Kidney (tissue), 22 donors: ENCODE measurements at regions of chr3 and their contacts with region 1.

Region 1: DNA sequence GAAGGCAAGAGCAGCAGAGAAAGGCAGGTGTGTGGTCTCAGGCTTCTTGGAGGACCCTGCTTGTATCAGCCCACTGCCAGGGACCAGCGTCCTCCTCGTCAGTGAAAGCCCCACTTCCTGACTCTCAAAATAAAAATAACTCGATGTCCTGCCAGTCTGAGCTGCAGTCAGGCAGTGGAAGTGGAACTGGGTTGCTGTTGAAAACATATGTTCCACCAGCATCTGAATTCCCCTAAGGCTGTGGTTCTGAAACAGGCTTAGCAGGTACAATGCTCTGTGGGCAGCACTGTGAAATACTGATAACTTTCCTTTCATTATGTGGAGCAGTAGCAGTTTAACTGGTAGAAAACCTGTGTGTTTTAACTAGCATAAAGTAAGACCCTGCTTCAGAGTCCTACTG is 121.6 kb upstream of the EIF1B start:
- DNase-seq: peak in 1 of 5 donors; percentile 16
- H3K4me3 ChIP-seq: no peak overlapping the region
- H3K27ac ChIP-seq: no peak overlapping the region
- H3K4me1 ChIP-seq: no peaks in the 10 kb centered on the region
- H3K27me3 ChIP-seq: no peaks in the 10 kb centered on the region
- CTCF ChIP-seq: no peak

Region 2: DNA sequence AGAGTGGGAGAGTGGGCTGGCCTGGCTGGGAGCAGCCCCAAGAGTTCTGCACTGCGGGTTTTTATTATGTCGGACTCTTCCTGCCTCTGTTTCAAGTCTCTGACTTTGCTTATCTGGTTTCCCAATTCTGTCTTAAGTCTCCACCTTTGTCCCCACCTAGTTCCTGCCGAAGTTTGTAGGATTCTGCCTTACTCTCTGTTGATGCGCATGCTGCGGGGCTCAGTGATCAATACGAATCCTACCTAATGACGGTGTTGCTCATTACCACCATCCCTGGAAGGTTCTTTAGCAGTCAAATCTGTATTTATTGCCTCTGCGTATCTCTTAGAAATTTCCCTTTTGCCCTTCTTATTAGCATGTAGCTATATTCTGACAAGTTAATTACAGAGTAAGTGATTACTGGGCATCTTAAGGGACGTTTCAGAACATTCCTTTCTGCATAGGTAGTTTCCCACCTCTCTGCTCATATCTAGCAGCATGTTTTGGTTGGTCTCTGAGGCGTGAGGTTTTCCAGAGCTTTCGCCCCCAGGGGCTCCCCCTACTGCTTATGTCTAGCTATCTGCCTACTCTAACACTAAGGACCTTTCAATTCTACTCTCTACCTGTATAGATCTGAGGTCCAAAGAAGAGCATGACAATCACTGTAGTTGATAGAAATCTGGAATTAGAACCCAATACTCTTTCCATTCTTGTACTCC is 114.5 kb before region 1 on chr3:
- intact Hi-C with region 1: no loop called
- DNase-seq: peak in 2 of 5 donors; percentile 27 to 28
- H3K4me3 ChIP-seq: no peak overlapping the region
- H3K27ac ChIP-seq: no peak overlapping the region
- H3K4me1 ChIP-seq: no peaks in the 10 kb centered on the region
- H3K27me3 ChIP-seq: no peaks in the 10 kb centered on the region
- CTCF ChIP-seq: no peak

Region 3: DNA sequence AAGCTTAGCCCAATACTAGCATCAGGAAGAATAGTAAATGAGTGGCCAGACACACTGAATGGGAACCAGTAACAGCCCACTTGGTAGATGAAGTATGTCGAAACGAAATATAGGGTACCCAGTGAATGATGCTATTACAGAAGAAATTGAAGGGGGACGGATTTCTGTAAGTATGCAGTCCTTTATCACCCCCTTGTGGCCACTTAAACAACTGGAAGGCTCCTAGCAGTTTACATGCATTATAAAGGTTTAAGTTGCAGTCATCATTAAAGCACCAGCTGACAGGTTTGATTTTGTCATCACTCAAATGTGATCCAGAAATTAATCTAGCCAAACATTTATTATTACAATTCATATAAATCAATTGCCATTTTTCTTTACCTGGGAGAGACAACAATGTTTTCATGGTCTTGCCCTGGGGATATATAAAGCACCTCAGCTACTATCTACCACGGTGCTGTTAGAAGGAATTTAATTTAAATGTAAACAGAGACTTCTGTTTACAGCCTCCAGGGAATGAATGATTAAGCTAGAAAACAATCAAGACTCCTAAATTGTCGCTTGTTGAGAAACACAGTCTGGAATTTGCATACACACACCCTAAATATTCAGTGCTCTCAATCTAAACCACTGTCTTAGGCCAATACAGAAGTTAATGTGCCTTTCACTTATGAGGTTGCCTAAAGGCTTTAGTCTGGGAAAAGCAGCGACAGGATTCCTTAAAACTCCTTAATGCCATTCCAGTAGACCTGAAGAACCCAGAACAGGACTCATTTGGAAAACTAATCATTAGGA is 129.3 kb after region 1 on chr3:
- intact Hi-C with region 1: loop called (anchors 5 kb)
- DNase-seq: peak in 3 of 5 donors; percentile 38 to 82 (median 73)
- H3K4me3 ChIP-seq: no peak overlapping the region
- H3K27ac ChIP-seq: no peak overlapping the region
- H3K4me1 ChIP-seq: peaks cover 0 to 8% (median 0%) of the 10 kb centered on the region in 3 donors
- H3K27me3 ChIP-seq: no peaks in the 10 kb centered on the region
- CTCF ChIP-seq: peak; percentile 80